Activated CD4-positive, alpha-beta T cell treated with anti-CD3 and anti-CD28 coated beads for 36 hours (primary cell): ENCODE measurements at regions of chr9 and their contacts with region 1.

Region 1: DNA sequence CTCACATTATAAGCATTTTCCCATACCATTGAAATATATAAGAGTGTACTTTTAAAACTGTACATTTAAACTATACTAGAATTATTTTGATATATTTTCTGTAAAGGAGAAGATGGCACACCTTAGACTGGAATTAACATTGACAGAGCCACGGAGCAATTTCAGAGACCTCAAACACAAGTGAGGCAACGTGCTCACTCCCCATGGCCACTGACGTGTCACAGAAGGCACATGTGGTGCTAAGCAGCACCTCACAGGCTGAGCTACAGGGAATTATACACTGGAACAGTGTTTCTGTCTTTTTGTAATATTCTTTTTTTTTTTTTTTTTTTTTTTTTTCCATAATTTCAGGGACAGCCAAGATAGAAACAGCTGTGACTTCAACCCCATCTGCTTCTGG is 66.5 kb downstream of the NUP214 start:
- DNase-seq: no peak
- ATAC-seq: no peak
- H3K4me3 Mint-ChIP-seq: no peak overlapping the region
- H3K27ac Mint-ChIP-seq: no peak overlapping the region
- H3K4me1 Mint-ChIP-seq: no peaks in the 10 kb centered on the region
- H3K27me3 Mint-ChIP-seq: no peaks in the 10 kb centered on the region

Region 2: GRCh38 chr9:131149688-131150053 is 42.2 kb before region 1 on chr9:
- CTCF ChIA-PET with region 1: no interaction called
- POLR2A ChIA-PET with region 1: no interaction called
- intact Hi-C with region 1: loop called in 1 of 2 experiments (anchors 2 kb)
- DNase-seq: no peak
- ATAC-seq: no peak
- H3K4me3 Mint-ChIP-seq: no peak overlapping the region
- H3K27ac Mint-ChIP-seq: peak overlapping the region; percentile 40
- H3K4me1 Mint-ChIP-seq: peaks cover 12% of the 10 kb centered on the region
- H3K27me3 Mint-ChIP-seq: no peaks in the 10 kb centered on the region

Region 3: DNA sequence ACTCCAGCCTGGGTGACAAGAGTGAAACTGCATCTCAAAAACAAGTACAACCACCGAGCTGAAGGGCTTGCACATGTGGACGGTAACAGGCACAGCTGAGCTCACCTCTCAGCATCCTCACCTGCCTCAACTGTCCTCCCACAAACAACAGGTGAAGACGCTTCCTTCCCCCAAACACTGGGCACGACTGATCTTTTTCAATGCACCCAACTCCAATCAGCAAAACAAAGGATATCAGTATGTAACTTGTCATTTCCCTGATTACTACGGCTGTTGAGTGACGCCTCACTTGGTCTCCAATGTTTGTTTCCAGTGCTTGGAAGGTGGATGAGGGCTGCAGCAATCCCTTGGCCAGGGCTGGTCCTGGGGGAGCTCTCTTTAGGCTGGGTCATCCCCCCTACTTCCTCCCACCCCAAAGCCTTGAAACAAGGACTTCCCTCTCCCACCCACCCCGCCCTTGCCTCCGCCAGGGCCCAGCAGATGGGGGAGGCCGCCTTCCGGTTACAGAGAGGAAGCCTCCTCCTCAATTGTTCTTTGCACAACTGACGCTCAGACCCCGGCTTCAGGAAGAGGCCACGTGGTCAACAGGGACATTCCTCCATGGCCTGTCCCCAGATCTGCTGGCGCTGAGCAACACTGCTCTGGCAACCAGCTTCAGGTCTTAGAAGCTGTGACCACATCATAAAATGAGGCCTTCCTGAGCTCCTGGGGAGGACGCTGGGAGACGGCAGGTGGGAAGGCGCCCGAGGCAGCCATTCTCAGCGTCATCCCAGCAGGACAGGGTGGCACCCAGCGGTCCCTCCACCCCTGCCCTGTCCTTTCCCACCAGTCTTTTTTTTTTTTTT is 78.5 kb after region 1 on chr9:
- CTCF ChIA-PET with region 1: no interaction called
- POLR2A ChIA-PET with region 1: no interaction called
- intact Hi-C with region 1: no loop called
- DNase-seq: peak; percentile 77
- ATAC-seq: peak; percentile 13
- H3K4me3 Mint-ChIP-seq: peak overlapping the region; percentile 90
- H3K27ac Mint-ChIP-seq: peak overlapping the region; percentile 100
- H3K4me1 Mint-ChIP-seq: peaks cover 58% of the 10 kb centered on the region
- H3K27me3 Mint-ChIP-seq: no peaks in the 10 kb centered on the region